Tibial artery (tissue), 4 donors: ENCODE measurements at regions of chr9 and their contacts with region 1.

Region 1: GRCh38 chr9:130042833-130043653 is at the start of gene FNBP1:
- DNase-seq: peak; percentile 77 to 89
- H3K4me3 ChIP-seq: peak within 1 kb of the TSS; percentile 72 to 98
- H3K27ac ChIP-seq: peak within 1 kb of the TSS; percentile 83 to 96
- H3K4me1 ChIP-seq: peaks cover 0 to 43% (median 29%) of the 10 kb centered on the region in 4 donors
- H3K27me3 ChIP-seq: no peaks in the 10 kb centered on the region
- CTCF ChIP-seq: no peak

Region 2: GRCh38 chr9:129823935-129824601 is 219.0 kb before region 1 on chr9 and contains the start of gene TOR1A:
- intact Hi-C with region 1: no loop called
- DNase-seq: peak; percentile 96 to 98
- H3K4me3 ChIP-seq: peak within 1 kb of the TSS; percentile 89 to 97
- H3K27ac ChIP-seq: peak within 1 kb of the TSS; percentile 71 to 86
- H3K4me1 ChIP-seq: peaks cover 0 to 9% (median 7%) of the 10 kb centered on the region in 4 donors
- H3K27me3 ChIP-seq: no peaks in the 10 kb centered on the region
- CTCF ChIP-seq: no peak

Region 3: GRCh38 chr9:129835021-129835871 is 207.8 kb before region 1 on chr9 and contains the starts of genes C9orf78 and USP20:
- intact Hi-C with region 1: loop called (anchors 5 kb)
- DNase-seq: peak; percentile 96 to 97
- H3K4me3 ChIP-seq: peak within 1 kb of the TSS; percentile 90 to 97
- H3K27ac ChIP-seq: peak within 1 kb of the TSS; percentile 91 to 96
- H3K4me1 ChIP-seq: peaks cover 0 to 55% (median 40%) of the 10 kb centered on the region in 4 donors
- H3K27me3 ChIP-seq: no peaks in the 10 kb centered on the region
- CTCF ChIP-seq: no peak